Mammary epithelial cell (primary cell): ENCODE measurements at regions of chr4 and their contacts with region 1.

Region 1: DNA sequence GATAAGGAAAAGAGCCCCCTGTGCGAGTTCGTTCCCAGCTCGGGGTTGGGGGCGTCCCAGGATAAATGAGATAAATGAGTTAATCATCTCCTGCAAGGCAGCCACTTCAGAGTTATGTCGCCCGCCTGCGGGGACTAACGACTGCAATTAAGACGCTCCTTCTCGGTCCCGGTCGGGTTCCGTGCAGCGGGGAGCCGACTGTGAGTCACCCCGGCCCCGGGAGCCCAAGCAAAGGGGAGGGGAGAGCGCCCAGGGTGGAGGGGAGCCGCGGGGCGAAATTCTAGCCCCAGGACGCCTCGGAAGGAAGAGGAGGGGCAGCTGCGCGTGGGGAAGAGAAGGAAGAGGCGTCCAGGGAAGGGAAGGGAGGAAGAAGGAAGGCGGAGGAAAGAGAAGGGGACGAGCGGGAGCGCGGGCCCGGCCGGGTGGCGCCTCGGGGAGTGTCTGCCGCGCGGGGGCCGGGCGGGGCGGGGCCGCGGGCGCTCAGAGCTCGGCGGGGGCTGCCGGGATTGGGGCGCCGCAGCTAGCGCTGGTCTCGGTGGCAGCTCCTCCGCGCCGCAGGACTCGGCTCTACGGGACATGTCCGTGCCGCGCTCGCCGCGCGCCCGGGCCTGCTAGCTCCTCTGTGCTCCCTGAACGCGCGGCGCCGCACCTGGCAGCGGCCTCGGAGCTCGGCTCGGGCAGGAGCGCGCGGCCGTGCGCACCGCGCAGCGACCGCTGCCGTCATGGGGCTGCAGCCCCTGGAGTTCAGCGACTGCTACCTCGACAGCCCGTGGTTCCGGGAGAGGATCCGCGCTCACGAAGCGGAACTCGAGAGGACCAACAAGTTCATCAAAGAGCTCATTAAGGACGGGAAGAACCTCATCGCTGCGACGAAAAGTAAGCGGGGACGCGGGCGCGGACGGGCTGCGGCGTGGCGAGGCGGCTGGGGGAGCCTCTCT is at the start of gene ARHGAP10:
- DNase-seq: peak; percentile 82
- H3K4me3 ChIP-seq: peak within 1 kb of the TSS; percentile 85 to 91 (median 86)
- H3K27ac ChIP-seq: peak within 1 kb of the TSS; percentile 80
- H3K4me1 ChIP-seq: peaks cover 48% of the 10 kb centered on the region
- H3K27me3 ChIP-seq: no peaks in the 10 kb centered on the region
- CTCF ChIP-seq: no peak
- total RNA-seq, gene ARHGAP10: 22.5 to 28.8 TPM

Region 2: DNA sequence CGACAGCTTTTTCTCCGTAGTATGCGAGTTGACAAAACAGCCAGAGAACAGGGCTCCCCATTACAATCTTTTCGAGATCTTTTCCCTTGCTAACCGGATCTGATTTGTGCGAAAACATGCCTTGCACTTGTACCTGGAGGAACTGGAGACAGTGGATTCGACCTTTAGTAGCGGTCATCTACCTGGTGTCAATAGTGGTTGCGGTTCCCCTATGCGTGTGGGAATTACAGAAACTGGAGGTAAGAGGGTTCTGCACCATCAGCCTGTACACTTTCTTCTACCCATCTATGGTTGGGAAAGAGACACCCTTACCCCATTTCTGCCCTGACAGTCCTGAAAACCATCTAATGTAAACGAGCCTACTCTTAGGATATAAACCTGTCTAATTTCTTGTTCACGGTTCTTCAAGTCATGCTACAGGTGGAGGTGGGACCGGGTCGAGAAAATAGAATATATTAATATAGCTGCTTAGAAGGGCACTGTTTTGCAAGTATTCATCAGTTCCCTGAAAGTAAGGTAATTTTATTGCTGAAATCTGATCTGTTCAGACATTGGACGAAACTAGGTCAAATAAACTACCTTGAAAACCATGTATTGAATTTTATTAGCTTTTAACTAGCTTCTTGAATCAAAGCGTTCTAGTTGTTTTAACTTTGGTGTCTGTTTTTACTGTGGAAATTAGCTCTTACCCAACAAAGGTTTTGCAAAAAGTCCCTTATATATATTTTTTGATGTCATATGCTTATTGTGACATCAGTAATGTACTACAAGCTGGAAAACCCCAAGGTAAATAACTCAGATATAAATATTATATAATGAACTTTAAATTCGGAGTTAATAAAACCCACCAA is 113.8 kb before region 1 on chr4:
- CTCF ChIA-PET with region 1: no interaction called
- dilution Hi-C with region 1: no loop called
- in situ Hi-C with region 1: no loop called
- intact Hi-C with region 1: no loop called
- DNase-seq: no peak
- H3K4me3 ChIP-seq: peak overlapping the region; percentile 63 to 98 (median 93)
- H3K27ac ChIP-seq: peak overlapping the region; percentile 73
- H3K4me1 ChIP-seq: peaks cover 3% of the 10 kb centered on the region
- H3K27me3 ChIP-seq: no peaks in the 10 kb centered on the region
- CTCF ChIP-seq: no peak

Region 3: GRCh38 chr4:147714575-147715401 is 17.1 kb before region 1 on chr4:
- CTCF ChIA-PET with region 1: no interaction called
- dilution Hi-C with region 1: no loop called
- in situ Hi-C with region 1: no loop called
- intact Hi-C with region 1: loop called (anchors 2 kb)
- DNase-seq: peak; percentile 66
- H3K4me3 ChIP-seq: peak overlapping the region in 1 of 3 experiments; percentile 9
- H3K27ac ChIP-seq: no peak overlapping the region
- H3K4me1 ChIP-seq: peaks cover 4% of the 10 kb centered on the region
- H3K27me3 ChIP-seq: no peaks in the 10 kb centered on the region
- CTCF ChIP-seq: no peak

Region 4: GRCh38 chr4:147831551-147832177 is 99.8 kb after region 1 on chr4:
- CTCF ChIA-PET with region 1: no interaction called
- dilution Hi-C with region 1: loop called (anchors 5 kb)
- in situ Hi-C with region 1: no loop called
- intact Hi-C with region 1: loop called (anchors 1 kb)
- DNase-seq: peak; percentile 96
- H3K4me3 ChIP-seq: no peak overlapping the region
- H3K27ac ChIP-seq: peak overlapping the region; percentile 90
- H3K4me1 ChIP-seq: peaks cover 55% of the 10 kb centered on the region
- H3K27me3 ChIP-seq: no peaks in the 10 kb centered on the region
- CTCF ChIP-seq: no peak

Region 5: DNA sequence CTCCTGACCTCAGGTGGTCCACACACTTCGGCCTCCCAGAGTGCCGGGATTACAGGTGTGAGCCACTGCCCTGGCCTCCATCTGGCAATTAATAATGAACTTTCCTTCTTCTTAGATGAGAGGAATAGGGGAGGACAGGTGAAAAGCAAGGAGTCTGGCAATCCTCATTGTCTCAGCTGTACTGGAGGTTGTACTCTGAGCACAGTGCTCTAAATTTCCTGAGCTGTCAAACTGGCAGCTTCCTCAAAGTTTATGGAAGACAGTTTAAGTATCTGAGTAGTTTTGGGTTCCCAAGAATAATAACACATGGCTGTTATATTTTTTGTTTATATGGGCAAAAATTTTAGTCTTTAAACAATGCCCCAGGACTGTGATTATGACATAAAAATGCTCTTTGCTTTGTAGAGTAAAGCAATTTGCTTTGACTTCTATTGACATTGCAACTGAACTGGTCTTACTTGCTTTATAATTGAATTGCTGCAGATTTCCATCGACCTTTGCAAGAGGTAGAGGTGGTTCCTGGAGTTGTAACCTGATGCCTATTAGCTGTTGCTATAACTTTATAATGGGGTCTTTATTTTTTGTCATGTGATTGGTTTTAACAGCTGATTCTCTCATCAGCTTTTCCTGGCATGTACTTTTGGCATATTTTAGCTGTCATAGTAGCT is 302.8 kb after region 1 on chr4:
- CTCF ChIA-PET with region 1: no interaction called
- dilution Hi-C with region 1: no loop called
- in situ Hi-C with region 1: no loop called
- intact Hi-C with region 1: no loop called
- DNase-seq: no peak
- H3K4me3 ChIP-seq: no peak overlapping the region
- H3K27ac ChIP-seq: no peak overlapping the region
- H3K4me1 ChIP-seq: no peaks in the 10 kb centered on the region
- H3K27me3 ChIP-seq: no peaks in the 10 kb centered on the region
- CTCF ChIP-seq: no peak